ENCODE measurements at regions of chr12 and their contacts with region 1.

Region 1: GRCh38 chr12:128729628-128730121 is 94.1 kb downstream of the SLC15A4 start:
- DNase-seq: peak; percentile 84

Region 2: DNA sequence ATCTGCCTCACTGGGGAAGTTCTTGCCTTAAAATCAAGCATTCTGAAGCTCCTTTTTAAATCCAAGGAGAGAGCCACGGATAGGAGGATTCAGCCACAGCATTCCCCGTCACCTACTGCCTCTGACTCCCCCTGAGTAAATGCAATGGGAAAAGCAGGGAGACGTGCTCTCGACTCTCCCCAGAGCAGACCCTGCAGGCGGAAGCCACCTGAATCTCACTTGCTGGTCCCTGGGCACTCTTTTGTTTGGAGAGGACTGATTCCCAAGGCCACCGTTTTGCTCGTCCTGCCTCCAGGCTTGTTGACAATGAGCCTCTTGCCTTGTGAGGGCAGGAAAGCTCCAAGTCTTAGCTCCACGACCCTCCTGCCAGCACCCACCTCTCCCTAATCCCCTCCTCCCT is 110.4 kb before region 1 on chr12:
- in situ Hi-C with region 1: no loop called
- DNase-seq: no peak

Region 3: DNA sequence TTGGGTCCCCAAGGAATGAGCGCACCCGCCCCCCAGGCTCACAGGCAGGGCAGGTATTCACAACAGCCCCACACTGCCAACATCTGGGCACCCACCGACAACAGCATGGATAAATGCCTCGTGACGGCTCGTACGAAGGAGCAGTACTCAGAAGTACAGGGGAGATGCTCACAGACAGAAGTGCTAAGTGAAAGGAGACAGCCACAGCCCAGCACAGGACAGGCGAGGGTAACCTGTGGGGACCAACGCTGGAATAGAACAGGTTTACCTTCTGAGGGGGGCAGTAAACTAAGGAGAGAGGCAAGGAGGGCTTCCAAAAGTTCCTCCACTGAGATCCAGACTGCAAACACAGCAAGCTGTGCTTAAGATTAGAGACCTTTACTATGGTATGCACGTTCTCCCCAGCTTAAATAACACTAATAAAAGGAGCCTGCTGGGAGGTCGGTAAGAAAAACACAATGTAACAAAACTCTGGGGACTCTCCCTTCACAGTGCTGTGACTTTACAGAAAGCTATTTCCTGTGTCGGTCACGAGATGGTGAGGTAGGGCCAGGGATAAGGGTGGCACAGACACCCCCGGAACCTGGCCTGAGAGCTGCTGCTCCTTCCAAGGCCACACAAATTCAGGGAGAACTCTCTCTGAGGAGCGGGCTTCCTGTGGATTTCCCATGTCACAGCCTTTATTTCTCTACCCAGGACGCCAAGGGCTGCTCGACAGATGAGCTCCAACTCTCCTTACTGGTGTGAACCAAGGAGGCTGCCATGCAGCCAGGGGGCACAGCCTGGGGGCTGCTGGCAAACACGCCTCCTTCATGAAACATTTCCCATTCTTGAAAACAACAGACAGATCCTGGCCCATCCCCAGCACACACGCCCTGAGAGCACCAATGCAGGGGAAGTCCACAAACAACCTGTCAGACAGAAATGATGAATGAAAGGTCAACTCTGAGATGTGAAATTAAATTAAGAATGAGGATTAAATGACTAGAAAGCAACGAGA is 67.7 kb after region 1 on chr12:
- in situ Hi-C with region 1: loop called (anchors 5 kb)
- DNase-seq: peak; percentile 68

Region 4: DNA sequence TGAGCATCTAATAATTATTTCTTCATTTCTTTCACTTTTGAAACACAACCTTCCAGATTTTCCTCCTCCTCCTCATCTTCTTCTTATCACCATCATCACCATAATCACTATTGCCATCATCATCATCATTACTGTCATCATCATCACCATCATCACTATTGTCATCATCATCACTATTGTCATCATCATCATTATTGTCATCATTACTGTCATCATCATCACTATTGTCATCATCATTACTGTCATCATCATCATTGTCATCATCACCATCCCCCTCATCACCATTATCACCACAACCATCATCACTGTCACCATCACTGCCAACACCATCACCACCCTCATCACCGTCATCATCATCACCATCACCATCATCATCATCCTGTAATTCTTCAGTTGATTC is 774.1 kb after region 1 on chr12:
- in situ Hi-C with region 1: no loop called
- DNase-seq: no peak

Measured in Caki2 (cell line).